ENCODE measurements at regions of chr18 and their contacts with region 1.

Region 1: DNA sequence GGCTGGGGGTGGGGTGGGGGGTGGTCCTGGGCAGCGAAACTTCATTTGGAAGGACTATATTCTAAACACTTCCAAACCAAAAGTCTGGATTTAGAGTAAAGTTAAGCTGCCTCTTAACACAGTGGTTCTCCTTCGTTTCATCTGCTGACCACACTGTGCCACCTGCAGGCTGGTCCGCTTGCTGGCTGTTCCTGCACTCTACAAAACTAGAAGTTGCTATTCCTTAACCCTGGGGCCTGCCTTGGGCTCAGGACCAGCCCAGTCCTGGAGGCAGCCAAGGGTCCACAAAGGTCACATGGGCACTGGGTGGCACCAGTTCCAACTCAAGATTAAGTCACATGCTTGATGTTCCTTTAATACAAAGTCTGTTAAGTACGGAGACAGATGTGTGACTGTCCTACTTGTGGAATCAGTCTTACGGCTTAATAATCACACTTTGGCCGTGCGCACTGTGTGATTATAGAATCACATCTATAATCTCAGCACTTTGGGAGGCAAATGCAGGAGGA is 195.4 kb downstream of the FAM210A start:
- DNase-seq: peak; percentile 4
- ATAC-seq: peak; percentile 73
- H3K4me3 ChIP-seq: no peak overlapping the region
- H3K27ac ChIP-seq: no peak overlapping the region
- H3K4me1 ChIP-seq: no peaks in the 10 kb centered on the region
- H3K27me3 ChIP-seq: peaks cover 15% of the 10 kb centered on the region; the same call in 1 of the 2 replicates
- CTCF ChIP-seq: peak in 2 of 3 experiments; percentile 25 to 30; a peak in 2 of 6 replicates
- POLR2A ChIP-seq: no peak
- RAD21 ChIP-seq: peak; percentile 53

Region 2: GRCh38 chr18:13216092-13216582 is 314.8 kb before region 1 on chr18:
- CTCF ChIA-PET with region 1: interaction called, 18 read pairs
- POLR2A ChIA-PET with region 1: no interaction called
- RAD21 ChIA-PET with region 1: interaction called, 4 read pairs
- intact Hi-C with region 1: loop called (anchors 10 kb)
- DNase-seq: peak; percentile 31
- ATAC-seq: peak; percentile 81
- H3K4me3 ChIP-seq: no peak overlapping the region
- H3K27ac ChIP-seq: no peak overlapping the region
- H3K4me1 ChIP-seq: peaks cover 4 to 5% of the 10 kb centered on the region in 2 experiments; a peak in 2 of 4 replicates
- H3K27me3 ChIP-seq: peaks cover 19% of the 10 kb centered on the region
- CTCF ChIP-seq: peak; percentile 45 to 72 (median 64); a peak in 5 of 6 replicates
- POLR2A ChIP-seq: no peak
- RAD21 ChIP-seq: peak; percentile 74